ENCODE measurements at regions of chr1 and their contacts with region 1.

Region 1: GRCh38 chr1:221530791-221531190 is 211.1 kb downstream of the DUSP10 start:
- DNase-seq: no peak
- ATAC-seq: no peak
- H3K4me3 ChIP-seq: no peak overlapping the region
- H3K27ac ChIP-seq: no peak overlapping the region
- H3K4me1 ChIP-seq: no peaks in the 10 kb centered on the region
- H3K27me3 ChIP-seq: no peaks in the 10 kb centered on the region
- CTCF ChIP-seq: no peak

Region 2: GRCh38 chr1:222009105-222009730 is 478.4 kb after region 1 on chr1:
- intact Hi-C with region 1: loop called in 1 of 2 experiments (anchors 10 kb)
- DNase-seq: no peak
- ATAC-seq: peak; percentile 48 to 73 (median 55)
- H3K4me3 ChIP-seq: no peak overlapping the region
- H3K27ac ChIP-seq: no peak overlapping the region
- H3K4me1 ChIP-seq: no peaks in the 10 kb centered on the region
- H3K27me3 ChIP-seq: no peaks in the 10 kb centered on the region
- CTCF ChIP-seq: peak; percentile 44